Activated CD8-positive, alpha-beta T cell treated with anti-CD3 and anti-CD28 coated beads, Interleukin-2, amount 10 ng/mL, durations not matched to agents 7 days and 5 days (primary cell): ENCODE measurements at regions of chr11 and their contacts with region 1.

Region 1: DNA sequence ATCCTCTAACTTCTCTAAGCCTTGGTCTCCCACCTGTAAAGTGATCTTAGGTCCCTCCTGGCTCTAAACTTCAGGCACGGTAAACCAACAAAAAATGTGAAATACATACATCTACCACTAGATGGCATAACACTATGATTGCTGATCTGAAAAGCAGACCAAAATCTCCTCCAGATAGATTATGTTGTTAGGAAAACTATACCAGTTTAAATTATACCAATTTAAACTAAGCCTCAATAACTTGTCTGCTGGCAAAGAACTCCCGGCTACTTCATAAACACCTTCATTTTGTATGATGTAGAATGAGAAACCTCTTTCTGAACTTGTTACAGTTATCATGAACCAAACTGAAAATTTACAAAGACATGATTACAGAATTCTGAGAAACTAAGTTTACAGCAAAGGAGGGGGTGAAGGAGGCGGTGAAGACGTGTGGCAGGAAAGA is 85.9 kb downstream of the SBF2 start:
- DNase-seq: no peak
- ATAC-seq: peak; percentile 70
- H3K4me3 Mint-ChIP-seq: no peak overlapping the region
- H3K27ac Mint-ChIP-seq: no peak overlapping the region
- H3K4me1 Mint-ChIP-seq: no peaks in the 10 kb centered on the region
- H3K27me3 Mint-ChIP-seq: peaks cover 17% of the 10 kb centered on the region

Region 2: GRCh38 chr11:10197091-10197490 is 11.1 kb before region 1 on chr11:
- CTCF ChIA-PET with region 1: interaction called, 10 read pairs
- POLR2A ChIA-PET with region 1: no interaction called
- DNase-seq: no peak
- ATAC-seq: no peak
- H3K4me3 Mint-ChIP-seq: no peak overlapping the region
- H3K27ac Mint-ChIP-seq: no peak overlapping the region
- H3K4me1 Mint-ChIP-seq: no peaks in the 10 kb centered on the region
- H3K27me3 Mint-ChIP-seq: no peaks in the 10 kb centered on the region

Region 3: DNA sequence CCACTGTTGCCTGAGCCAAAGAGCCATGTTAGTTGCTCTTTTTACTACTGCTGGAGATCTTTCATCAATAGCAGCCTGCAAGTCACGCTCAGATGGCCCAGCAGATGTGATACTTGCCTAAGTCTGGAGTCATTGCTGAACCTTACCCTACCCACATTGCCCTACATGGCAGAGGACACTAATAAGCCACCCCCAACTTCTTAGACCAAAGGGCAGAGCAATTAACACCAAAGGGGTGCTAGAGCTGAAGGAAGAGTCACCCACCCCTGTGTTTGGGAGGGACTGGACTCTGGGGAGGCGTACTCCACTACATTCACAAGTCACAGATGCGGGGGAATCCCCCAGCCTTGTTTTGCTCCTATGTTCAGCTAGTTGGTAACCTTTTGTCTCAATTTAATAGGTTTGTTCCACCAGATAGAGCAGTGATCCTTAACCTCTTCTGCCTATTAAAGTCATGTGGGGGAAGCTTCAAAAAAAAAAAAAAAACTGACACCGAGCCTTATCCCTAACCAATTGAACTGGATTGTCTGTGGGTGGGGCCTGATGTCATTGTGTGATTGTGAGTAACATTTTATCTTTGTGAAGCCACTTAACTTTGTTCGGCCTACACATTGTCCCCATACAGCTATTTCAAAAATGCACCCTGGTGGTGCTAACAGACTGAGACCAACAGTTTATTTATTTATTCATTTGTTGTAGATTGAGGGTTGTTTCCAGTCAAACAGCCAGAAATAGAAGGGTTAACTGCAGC is 109.8 kb after region 1 on chr11:
- CTCF ChIA-PET with region 1: interaction called, 12 read pairs
- POLR2A ChIA-PET with region 1: no interaction called
- DNase-seq: no peak
- ATAC-seq: no peak
- H3K4me3 Mint-ChIP-seq: no peak overlapping the region
- H3K27ac Mint-ChIP-seq: no peak overlapping the region
- H3K4me1 Mint-ChIP-seq: peaks cover 9% of the 10 kb centered on the region
- H3K27me3 Mint-ChIP-seq: no peaks in the 10 kb centered on the region